Natural killer cell (primary cell): ENCODE measurements at regions of chr18 and their contacts with region 1.

Region 1: DNA sequence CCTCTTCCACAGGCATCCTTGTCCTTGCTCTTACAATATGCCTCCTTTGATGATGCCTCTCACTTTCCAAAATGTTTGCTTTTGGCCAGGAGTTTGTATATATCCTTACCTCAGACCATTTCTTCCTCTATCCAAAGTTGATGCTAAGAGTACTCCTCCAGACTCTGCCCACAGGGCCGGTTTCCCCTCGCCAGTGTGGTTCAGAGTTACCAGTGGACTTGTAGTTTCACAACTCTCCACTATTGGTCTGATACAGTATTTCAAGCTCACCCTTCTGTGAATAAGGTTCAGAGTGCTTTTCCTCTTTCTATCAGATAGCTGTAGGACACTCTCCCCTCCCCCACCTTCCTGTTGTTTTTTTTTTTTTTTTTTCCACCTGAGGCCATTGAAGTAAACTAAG is 42.2 kb upstream of the LINC00305 start:
- DNase-seq: no peak
- ATAC-seq: no peak
- H3K4me3 ChIP-seq: no peak overlapping the region
- H3K4me3 Mint-ChIP-seq: no peak overlapping the region
- H3K27ac ChIP-seq: no peak overlapping the region
- H3K27ac Mint-ChIP-seq: no peak overlapping the region
- H3K4me1 ChIP-seq: no peaks in the 10 kb centered on the region
- H3K4me1 Mint-ChIP-seq: no peaks in the 10 kb centered on the region
- H3K27me3 ChIP-seq: no peaks in the 10 kb centered on the region
- H3K27me3 Mint-ChIP-seq: no peaks in the 10 kb centered on the region
- CTCF ChIP-seq: no peak

Region 2: DNA sequence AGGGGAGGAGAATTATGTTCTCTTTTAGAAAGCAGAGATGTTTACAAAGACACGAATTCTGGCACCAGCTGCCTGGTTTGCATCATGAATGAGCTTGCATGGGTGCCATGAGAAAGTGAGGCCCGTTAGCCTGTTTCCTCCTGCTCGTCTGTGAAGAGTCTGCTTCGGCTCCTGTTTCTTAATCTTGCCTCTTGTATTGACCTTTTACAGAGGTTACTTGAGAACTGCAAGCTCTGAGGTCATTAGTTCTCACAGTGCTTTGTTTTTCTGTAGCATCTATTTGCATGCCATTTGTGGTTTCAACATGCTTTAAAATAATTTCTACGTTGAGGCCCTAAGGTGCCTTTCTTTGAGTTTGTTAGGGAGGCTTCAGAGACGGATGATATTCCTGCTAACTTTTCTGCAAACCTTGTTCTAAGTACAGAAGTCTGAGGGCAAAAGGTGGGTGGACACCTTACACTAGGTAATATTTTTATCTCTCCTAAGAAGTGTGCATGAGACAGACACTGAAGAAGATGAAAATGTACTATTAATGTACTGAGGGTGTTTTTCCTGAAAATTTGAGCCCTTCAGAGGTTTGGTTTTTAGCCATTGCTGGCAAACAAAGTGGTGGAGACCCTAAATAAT is 11.3 kb after region 1 on chr18:
- intact Hi-C with region 1: no loop called
- DNase-seq: no peak
- ATAC-seq: no peak
- H3K4me3 ChIP-seq: no peak overlapping the region
- H3K4me3 Mint-ChIP-seq: no peak overlapping the region
- H3K27ac ChIP-seq: no peak overlapping the region
- H3K27ac Mint-ChIP-seq: no peak overlapping the region
- H3K4me1 ChIP-seq: no peaks in the 10 kb centered on the region
- H3K4me1 Mint-ChIP-seq: peaks cover 2% of the 10 kb centered on the region in 2 donors
- H3K27me3 ChIP-seq: no peaks in the 10 kb centered on the region
- H3K27me3 Mint-ChIP-seq: no peaks in the 10 kb centered on the region
- CTCF ChIP-seq: no peak

Region 3: DNA sequence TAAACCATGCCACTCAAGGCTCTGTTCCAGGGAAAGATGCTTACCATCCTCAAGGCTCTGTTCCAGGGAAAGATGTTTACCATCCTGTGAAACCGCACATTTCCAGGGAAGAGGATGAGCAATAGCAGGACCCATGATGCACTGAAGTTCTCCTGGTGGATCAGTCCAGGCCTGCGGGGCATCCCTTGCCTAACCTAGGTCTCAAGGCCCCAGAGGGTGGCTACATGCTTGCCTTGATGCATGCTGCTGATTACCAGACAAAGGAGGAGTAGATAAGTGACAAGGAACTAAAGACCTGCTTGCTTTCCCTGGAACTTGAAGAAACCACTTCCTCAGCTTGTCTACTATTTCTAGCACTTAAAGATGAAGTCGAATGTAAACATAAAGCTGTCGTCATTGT is 68.8 kb after region 1 on chr18:
- intact Hi-C with region 1: loop called (anchors 10 kb)
- DNase-seq: no peak
- ATAC-seq: no peak
- H3K4me3 ChIP-seq: no peak overlapping the region
- H3K4me3 Mint-ChIP-seq: no peak overlapping the region
- H3K27ac ChIP-seq: no peak overlapping the region
- H3K27ac Mint-ChIP-seq: no peak overlapping the region
- H3K4me1 ChIP-seq: no peaks in the 10 kb centered on the region
- H3K4me1 Mint-ChIP-seq: no peaks in the 10 kb centered on the region
- H3K27me3 ChIP-seq: no peaks in the 10 kb centered on the region
- H3K27me3 Mint-ChIP-seq: peaks cover 0 to 2% of the 10 kb centered on the region in 2 donors
- CTCF ChIP-seq: no peak

Region 4: GRCh38 chr18:64546451-64546850 is 355.4 kb after region 1 on chr18:
- intact Hi-C with region 1: no loop called
- DNase-seq: no peak
- ATAC-seq: no peak
- H3K4me3 ChIP-seq: no peak overlapping the region
- H3K4me3 Mint-ChIP-seq: no peak overlapping the region
- H3K27ac ChIP-seq: no peak overlapping the region
- H3K27ac Mint-ChIP-seq: no peak overlapping the region
- H3K4me1 ChIP-seq: no peaks in the 10 kb centered on the region
- H3K4me1 Mint-ChIP-seq: no peaks in the 10 kb centered on the region
- H3K27me3 ChIP-seq: no peaks in the 10 kb centered on the region
- H3K27me3 Mint-ChIP-seq: no peaks in the 10 kb centered on the region
- CTCF ChIP-seq: no peak